Mammary epithelial cell (primary cell): ENCODE measurements at regions of chr12 and their contacts with region 1.

Region 1: GRCh38 chr12:15088105-15088504 is 115.3 kb downstream of the PDE6H start:
- DNase-seq: no peak
- H3K4me3 ChIP-seq: no peak overlapping the region
- H3K27ac ChIP-seq: no peak overlapping the region
- H3K4me1 ChIP-seq: no peaks in the 10 kb centered on the region
- H3K27me3 ChIP-seq: no peaks in the 10 kb centered on the region
- CTCF ChIP-seq: no peak

Region 2: GRCh38 chr12:15074351-15074750 is 13.8 kb before region 1 on chr12:
- CTCF ChIA-PET with region 1: no interaction called
- dilution Hi-C with region 1: no loop called
- in situ Hi-C with region 1: no loop called
- intact Hi-C with region 1: loop called (anchors 1 kb)
- DNase-seq: no peak
- H3K4me3 ChIP-seq: no peak overlapping the region
- H3K27ac ChIP-seq: no peak overlapping the region
- H3K4me1 ChIP-seq: no peaks in the 10 kb centered on the region
- H3K27me3 ChIP-seq: no peaks in the 10 kb centered on the region
- CTCF ChIP-seq: no peak